A673 (cell line): ENCODE measurements at regions of chr19 and their contacts with region 1.

Region 1: GRCh38 chr19:54882758-54883157 is 8.7 kb downstream of the FCAR start:
- DNase-seq: peak; percentile 30
- H3K4me3 ChIP-seq: no peak overlapping the region
- H3K27ac ChIP-seq: no peak overlapping the region
- H3K4me1 ChIP-seq: no peaks in the 10 kb centered on the region
- H3K27me3 ChIP-seq: peaks cover 11% of the 10 kb centered on the region
- CTCF ChIP-seq: peak; percentile 39

Region 2: DNA sequence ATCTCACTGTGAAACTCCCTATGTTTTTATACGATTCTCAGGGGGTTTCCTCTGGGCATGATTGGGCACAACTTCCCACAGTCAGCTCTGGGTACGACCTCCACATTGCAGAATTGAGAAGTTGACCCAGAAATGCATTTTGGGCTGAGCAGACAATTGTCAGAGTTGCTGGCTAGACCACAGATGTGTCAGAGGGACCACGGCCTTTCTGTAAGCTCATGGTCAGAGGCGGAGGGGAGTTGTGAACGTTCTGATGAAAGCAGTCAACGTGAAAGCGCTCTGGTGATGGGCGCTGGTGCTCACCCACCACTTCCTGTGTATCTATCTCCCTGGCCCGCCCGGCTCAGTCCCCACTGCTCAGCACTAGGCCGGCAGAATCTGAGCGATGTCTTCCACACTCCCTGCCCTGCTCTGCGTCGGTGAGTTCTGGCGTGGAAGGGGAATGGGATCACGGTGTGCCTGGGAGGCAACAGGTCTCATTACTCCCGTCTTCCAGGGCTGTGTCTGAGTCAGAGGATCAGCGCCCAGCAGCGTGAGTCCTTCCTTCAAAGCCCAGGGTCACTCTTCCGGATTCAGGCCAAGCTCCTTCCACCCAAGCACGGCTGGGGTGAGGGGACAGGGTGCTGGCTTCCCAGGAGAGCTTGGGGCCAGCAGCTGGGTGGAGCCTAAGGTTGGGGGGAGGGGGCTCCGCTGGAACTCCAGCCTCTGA is 23.2 kb after region 1 on chr19 and contains the start of gene NCR1:
- CTCF ChIA-PET with region 1: interaction called, 11 read pairs
- POLR2A ChIA-PET with region 1: no interaction called
- intact Hi-C with region 1: no loop called
- DNase-seq: no peak
- H3K4me3 ChIP-seq: no peak within 1 kb of the TSS
- H3K27ac ChIP-seq: no peak within 1 kb of the TSS
- H3K4me1 ChIP-seq: no peaks in the 10 kb centered on the region
- H3K27me3 ChIP-seq: no peaks in the 10 kb centered on the region
- CTCF ChIP-seq: no peak
- total RNA-seq, gene NCR1: not detected in 2 replicates

Region 3: GRCh38 chr19:54916822-54917221 is 34.1 kb after region 1 on chr19:
- CTCF ChIA-PET with region 1: interaction called, 7 read pairs
- POLR2A ChIA-PET with region 1: no interaction called
- intact Hi-C with region 1: loop called (anchors 5 kb)
- DNase-seq: no peak
- H3K4me3 ChIP-seq: no peak overlapping the region
- H3K27ac ChIP-seq: no peak overlapping the region
- H3K4me1 ChIP-seq: no peaks in the 10 kb centered on the region
- H3K27me3 ChIP-seq: peaks cover 3% of the 10 kb centered on the region
- CTCF ChIP-seq: no peak